ENCODE measurements at regions of chr21 and their contacts with region 1.

Region 1: DNA sequence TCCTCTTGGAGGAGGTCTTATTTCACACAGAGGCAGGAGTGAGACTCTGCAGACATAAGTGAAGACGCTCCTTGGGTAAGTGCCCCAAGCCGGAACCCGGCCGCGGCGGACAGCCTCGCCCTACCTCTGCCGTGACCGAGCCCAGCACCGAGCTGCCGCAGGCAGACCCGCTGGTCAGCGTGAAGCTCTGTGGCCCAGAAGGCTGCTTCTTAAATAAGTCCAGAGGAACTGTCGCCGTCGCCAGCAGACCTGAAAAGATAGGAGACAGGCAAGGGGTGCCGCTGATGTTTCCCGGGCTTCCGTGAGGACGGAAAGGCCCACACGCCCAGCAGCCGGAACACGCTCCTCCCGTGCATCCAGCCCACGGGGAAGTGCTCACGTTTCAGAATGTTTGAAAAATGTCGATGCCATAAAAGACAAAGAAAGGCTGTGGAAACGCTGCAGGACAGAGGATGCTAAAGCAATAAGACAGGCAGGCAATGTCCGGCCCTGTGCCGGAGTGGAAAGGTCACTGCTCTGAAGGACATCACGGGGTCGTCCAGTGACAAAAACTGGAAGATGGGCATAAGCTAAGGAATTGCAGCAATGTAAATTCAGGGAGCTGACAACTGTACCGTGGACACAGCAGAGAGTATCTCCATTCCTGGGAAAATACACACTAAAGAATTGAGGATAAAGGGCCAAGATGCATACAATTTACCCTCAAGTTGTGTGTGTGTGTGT is 28.6 kb upstream of the PRDM15 start:
- DNase-seq: peak; percentile 78

Region 2: GRCh38 chr21:41933313-41934086 is 25.8 kb after region 1 on chr21:
- intact Hi-C with region 1: no loop called
- DNase-seq: peak; percentile 85

Region 3: GRCh38 chr21:41966041-41966684 is 58.5 kb after region 1 on chr21:
- intact Hi-C with region 1: no loop called
- DNase-seq: peak; percentile 49

Region 4: GRCh38 chr21:42009831-42010523 is 102.3 kb after region 1 on chr21 and contains the start of gene ZBTB21:
- intact Hi-C with region 1: no loop called
- DNase-seq: peak; percentile 100
- total RNA-seq, gene ZBTB21: 12.6 to 25.6 TPM

Region 5: DNA sequence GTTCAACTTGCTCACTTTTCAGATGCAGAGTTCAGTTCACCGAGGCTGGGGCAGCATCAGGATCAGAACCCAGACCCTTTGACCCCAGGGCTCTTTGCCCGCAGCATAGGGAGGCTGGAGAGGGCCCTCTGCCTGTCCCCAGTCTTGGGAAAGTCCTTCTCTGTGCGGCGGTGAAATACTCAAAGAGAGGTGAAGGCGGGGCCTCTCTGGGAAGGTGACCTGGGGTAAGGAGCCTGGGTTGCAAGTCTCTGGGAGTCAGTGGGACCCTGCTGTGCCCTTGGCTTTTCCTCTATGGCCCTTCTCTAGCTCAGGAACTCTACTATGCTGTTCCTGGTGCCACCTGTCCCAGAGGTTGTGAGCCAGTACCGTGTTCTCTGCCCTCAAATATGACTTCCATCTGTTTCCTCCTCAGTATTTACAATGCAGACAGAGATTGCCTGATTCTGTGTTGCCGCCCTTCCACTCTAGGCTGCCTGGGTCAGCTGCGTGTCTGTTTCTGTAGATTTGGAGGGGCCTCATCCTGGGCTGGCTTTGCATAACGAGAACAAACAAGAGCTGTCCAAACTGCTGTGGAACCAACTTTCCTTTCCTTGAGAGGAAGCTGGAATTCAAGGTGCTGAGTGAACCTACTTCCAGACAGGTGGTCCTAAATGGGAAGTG is 121.2 kb after region 1 on chr21:
- intact Hi-C with region 1: no loop called
- DNase-seq: no peak

Region 6: GRCh38 chr21:42644223-42645208 is 736.8 kb after region 1 on chr21:
- intact Hi-C with region 1: loop called in 1 of 2 experiments (anchors 5 kb)
- DNase-seq: peak; percentile 75

Measured in posterior vena cava (tissue), 2 donors.